ENCODE measurements at regions of chr12 and their contacts with region 1.

Region 1: GRCh38 chr12:47576289-47576945 is 129.4 kb downstream of the RPAP3 start:
- DNase-seq: no peak
- H3K4me3 Mint-ChIP-seq: no peak overlapping the region
- H3K27ac Mint-ChIP-seq: no peak overlapping the region
- H3K4me1 Mint-ChIP-seq: peaks cover 18% of the 10 kb centered on the region
- H3K27me3 Mint-ChIP-seq: no peaks in the 10 kb centered on the region

Region 2: DNA sequence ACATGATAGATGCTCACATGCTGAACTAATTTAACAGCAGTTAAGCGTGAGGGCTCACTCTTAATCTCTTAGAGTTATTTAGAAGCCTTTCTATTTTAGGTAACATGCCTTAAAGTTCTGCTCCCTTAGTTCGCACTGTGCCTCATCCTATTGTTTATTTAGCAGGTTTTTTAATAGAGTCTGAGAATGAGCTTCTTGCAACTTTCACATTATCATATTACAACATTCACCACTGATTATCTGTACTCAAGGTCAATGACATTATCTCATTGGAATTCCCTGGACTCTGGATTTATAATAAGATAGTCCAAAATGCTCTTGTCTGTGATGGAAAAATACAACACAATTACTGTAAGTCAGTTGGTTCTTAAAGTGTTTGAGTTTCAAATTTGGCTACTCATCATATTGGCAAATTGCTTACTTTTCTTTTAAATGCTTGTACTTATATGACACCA is 1020.3 kb before region 1 on chr12:
- intact Hi-C with region 1: loop called (anchors 10 kb)
- DNase-seq: no peak
- H3K4me3 Mint-ChIP-seq: no peak overlapping the region
- H3K27ac Mint-ChIP-seq: no peak overlapping the region
- H3K4me1 Mint-ChIP-seq: peaks cover 38% of the 10 kb centered on the region
- H3K27me3 Mint-ChIP-seq: no peaks in the 10 kb centered on the region

Region 3: GRCh38 chr12:47419497-47419896 is 156.9 kb before region 1 on chr12:
- intact Hi-C with region 1: loop called (anchors 5 kb)
- DNase-seq: no peak
- H3K4me3 Mint-ChIP-seq: no peak overlapping the region
- H3K27ac Mint-ChIP-seq: peak overlapping the region; percentile 78
- H3K4me1 Mint-ChIP-seq: peaks cover 20% of the 10 kb centered on the region
- H3K27me3 Mint-ChIP-seq: no peaks in the 10 kb centered on the region

Region 4: GRCh38 chr12:47636908-47637780 is 60.7 kb after region 1 on chr12:
- intact Hi-C with region 1: no loop called
- DNase-seq: peak; percentile 76
- H3K4me3 Mint-ChIP-seq: no peak overlapping the region
- H3K27ac Mint-ChIP-seq: no peak overlapping the region
- H3K4me1 Mint-ChIP-seq: peaks cover 5% of the 10 kb centered on the region
- H3K27me3 Mint-ChIP-seq: no peaks in the 10 kb centered on the region

Measured in activated CD4-positive, alpha-beta T cell treated with anti-CD3 and anti-CD28 coated beads, Interleukin-2, amount 10 ng/mL, durations not matched to agents 24 days and 14 days (primary cell).